Tibial artery (tissue), 4 donors: ENCODE measurements at regions of chr4 and their contacts with region 1.

Region 1: GRCh38 chr4:101103381-101104142 is 243.8 kb downstream of the PPP3CA start:
- DNase-seq: no peak
- H3K4me3 ChIP-seq: no peak overlapping the region
- H3K27ac ChIP-seq: peak overlapping the region in 1 of 2 donors; percentile 5
- H3K4me1 ChIP-seq: peaks cover 0 to 39% (median 21%) of the 10 kb centered on the region in 4 donors
- H3K27me3 ChIP-seq: no peaks in the 10 kb centered on the region
- CTCF ChIP-seq: no peak

Region 2: DNA sequence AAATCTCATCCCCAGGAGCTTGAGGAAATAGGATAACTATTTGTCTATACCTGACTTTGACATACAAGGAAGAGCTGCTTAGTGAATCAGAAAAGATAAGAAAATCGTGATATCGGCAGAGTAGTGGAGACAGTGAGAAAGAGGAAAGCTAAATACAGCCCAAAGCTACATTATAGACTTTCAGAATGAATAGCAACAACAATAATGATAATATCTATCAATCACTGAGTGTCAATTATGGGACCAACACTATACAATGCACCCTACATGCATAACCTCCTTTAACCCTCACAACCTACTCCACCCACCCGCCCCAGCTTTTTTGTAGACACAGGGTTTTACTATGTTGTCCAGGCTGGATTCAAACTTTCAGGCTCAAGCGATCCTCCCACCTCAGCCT is 38.7 kb after region 1 on chr4:
- intact Hi-C with region 1: loop called (anchors 2 kb)
- DNase-seq: no peak
- H3K4me3 ChIP-seq: no peak overlapping the region
- H3K27ac ChIP-seq: no peak overlapping the region
- H3K4me1 ChIP-seq: peaks cover 0 to 3% (median 0%) of the 10 kb centered on the region in 4 donors
- H3K27me3 ChIP-seq: no peaks in the 10 kb centered on the region
- CTCF ChIP-seq: no peak